ENCODE measurements at regions of chr11 and their contacts with region 1.

Region 1: GRCh38 chr11:62787005-62787759 is at the start of gene TMEM179B:
- DNase-seq: peak; percentile 94 to 100 (median 99)
- ATAC-seq: peak; percentile 68
- H3K4me3 ChIP-seq: peak within 1 kb of the TSS; percentile 94 to 96
- H3K4me3 Mint-ChIP-seq: peak within 1 kb of the TSS; percentile 94
- H3K27ac ChIP-seq: peak within 1 kb of the TSS; percentile 89 to 91
- H3K27ac Mint-ChIP-seq: peak within 1 kb of the TSS; percentile 95
- H3K4me1 ChIP-seq: peaks cover 42% of the 10 kb centered on the region
- H3K4me1 Mint-ChIP-seq: peaks cover 41% of the 10 kb centered on the region
- H3K27me3 ChIP-seq: no peaks in the 10 kb centered on the region
- H3K27me3 Mint-ChIP-seq: no peaks in the 10 kb centered on the region
- CTCF ChIP-seq: peak; percentile 34
- total RNA-seq, gene TMEM179B: 27.5 to 28.4 TPM

Region 2: DNA sequence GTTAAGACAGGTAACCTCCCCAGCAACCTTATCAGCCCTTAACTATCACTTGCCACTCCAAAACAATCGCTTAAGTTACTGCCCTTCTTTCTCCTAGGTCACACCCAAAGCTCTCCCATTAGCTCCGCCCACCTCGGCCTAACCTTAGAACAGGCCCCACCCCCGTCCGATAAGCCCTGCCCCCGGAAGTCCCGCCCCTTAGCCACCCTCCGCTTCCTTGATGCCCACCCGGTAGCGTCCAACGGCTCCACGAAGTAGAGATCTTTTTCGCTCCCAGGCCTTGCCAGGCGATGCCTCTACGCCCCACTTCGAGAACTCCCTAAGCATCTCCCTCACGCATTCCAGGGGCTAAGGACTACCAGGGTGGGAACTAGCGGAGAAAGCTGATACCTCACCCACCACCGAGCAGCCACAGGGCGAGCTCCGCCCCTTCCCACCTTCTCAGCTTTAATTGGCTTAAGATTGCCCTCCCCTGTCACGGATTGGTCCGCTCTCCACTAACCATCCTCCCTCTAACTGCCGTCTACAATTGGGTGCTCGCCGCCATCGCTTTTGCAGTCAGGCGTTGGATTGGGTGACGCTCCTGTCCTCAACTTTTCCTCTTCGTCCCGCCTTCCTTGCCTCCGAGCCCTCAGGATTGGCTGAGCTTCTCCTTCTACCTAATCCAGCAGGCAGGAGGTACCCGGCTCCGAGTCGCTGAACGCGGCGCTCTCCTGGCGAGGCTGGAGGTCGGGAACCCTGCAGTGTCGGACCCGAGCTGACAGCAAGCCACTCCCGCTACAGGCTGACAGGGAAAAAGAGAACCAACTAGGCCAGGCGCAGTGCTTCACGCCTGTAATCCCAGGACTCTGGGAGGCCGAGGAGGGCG is 33.2 kb before region 1 on chr11 and contains the start of gene ZBTB3:
- CTCF ChIA-PET with region 1: interaction called, 8 read pairs
- POLR2A ChIA-PET with region 1: interaction called, 37 read pairs
- intact Hi-C with region 1: loop called in 1 of 2 experiments (anchors 5 kb)
- DNase-seq: peak; percentile 93 to 100 (median 96)
- ATAC-seq: peak; percentile 93
- H3K4me3 ChIP-seq: peak within 1 kb of the TSS; percentile 72 to 88
- H3K4me3 Mint-ChIP-seq: peak within 1 kb of the TSS; percentile 99
- H3K27ac ChIP-seq: peak within 1 kb of the TSS; percentile 64 to 91
- H3K27ac Mint-ChIP-seq: peak within 1 kb of the TSS; percentile 98
- H3K4me1 ChIP-seq: peaks cover 28% of the 10 kb centered on the region
- H3K4me1 Mint-ChIP-seq: peaks cover 32% of the 10 kb centered on the region
- H3K27me3 ChIP-seq: no peaks in the 10 kb centered on the region
- H3K27me3 Mint-ChIP-seq: no peaks in the 10 kb centered on the region
- CTCF ChIP-seq: no peak
- total RNA-seq, gene ZBTB3: 3.7 to 4.8 TPM

Region 3: DNA sequence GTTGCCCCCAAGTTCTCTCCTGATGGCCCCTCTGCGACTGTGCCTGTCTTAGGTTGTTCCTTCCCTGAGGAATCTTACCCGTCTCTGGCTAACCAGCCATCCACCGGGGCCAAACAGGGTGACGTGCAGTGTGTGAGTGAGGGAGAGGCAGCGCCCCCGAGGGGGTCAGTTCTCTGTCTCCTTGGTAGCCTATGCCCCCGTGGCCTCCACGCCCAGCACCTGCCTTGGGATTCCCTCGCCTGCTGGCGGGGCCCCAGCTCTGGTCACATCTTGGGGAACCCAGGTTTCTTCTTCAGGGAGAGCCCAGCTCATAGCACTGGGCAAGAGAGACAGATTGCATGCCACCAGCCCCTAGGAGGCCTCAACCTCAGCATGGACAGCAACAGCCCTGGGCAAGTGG is 12.3 kb after region 1 on chr11:
- CTCF ChIA-PET with region 1: interaction called, 29 read pairs
- POLR2A ChIA-PET with region 1: interaction called, 9 read pairs
- intact Hi-C with region 1: no loop called
- DNase-seq: no peak
- ATAC-seq: no peak
- H3K4me3 ChIP-seq: no peak overlapping the region
- H3K4me3 Mint-ChIP-seq: no peak overlapping the region
- H3K27ac ChIP-seq: peak overlapping the region in 1 of 2 experiments; percentile 18
- H3K27ac Mint-ChIP-seq: no peak overlapping the region
- H3K4me1 ChIP-seq: peaks cover 12% of the 10 kb centered on the region
- H3K4me1 Mint-ChIP-seq: peaks cover 32% of the 10 kb centered on the region
- H3K27me3 ChIP-seq: no peaks in the 10 kb centered on the region
- H3K27me3 Mint-ChIP-seq: no peaks in the 10 kb centered on the region
- CTCF ChIP-seq: no peak

Region 4: GRCh38 chr11:62831520-62832335 is 44.5 kb after region 1 on chr11 and contains the start of gene STX5:
- CTCF ChIA-PET with region 1: interaction called, 13 read pairs
- POLR2A ChIA-PET with region 1: interaction called, 13 read pairs
- intact Hi-C with region 1: loop called (anchors 1 kb)
- DNase-seq: peak; percentile 99 to 100 (median 100)
- ATAC-seq: peak; percentile 97
- H3K4me3 ChIP-seq: peak within 1 kb of the TSS; percentile 88 to 95
- H3K4me3 Mint-ChIP-seq: peak within 1 kb of the TSS; percentile 96
- H3K27ac ChIP-seq: peak within 1 kb of the TSS; percentile 94 to 95
- H3K27ac Mint-ChIP-seq: peak within 1 kb of the TSS; percentile 98
- H3K4me1 ChIP-seq: peaks cover 21% of the 10 kb centered on the region
- H3K4me1 Mint-ChIP-seq: peaks cover 42% of the 10 kb centered on the region
- H3K27me3 ChIP-seq: no peaks in the 10 kb centered on the region
- H3K27me3 Mint-ChIP-seq: no peaks in the 10 kb centered on the region
- CTCF ChIP-seq: no peak
- total RNA-seq, gene STX5: 113 TPM

Region 5: GRCh38 chr11:62855571-62856332 is 68.6 kb after region 1 on chr11:
- CTCF ChIA-PET with region 1: interaction called, 56 read pairs
- POLR2A ChIA-PET with region 1: interaction called, 102 read pairs
- intact Hi-C with region 1: loop called (anchors 2 kb)
- DNase-seq: peak; percentile 96 to 100 (median 98)
- ATAC-seq: peak; percentile 91
- H3K4me3 ChIP-seq: peak overlapping the region; percentile 82 to 89
- H3K4me3 Mint-ChIP-seq: peak overlapping the region; percentile 96
- H3K27ac ChIP-seq: peak overlapping the region; percentile 76 to 84
- H3K27ac Mint-ChIP-seq: peak overlapping the region; percentile 91
- H3K4me1 ChIP-seq: peaks cover 36% of the 10 kb centered on the region
- H3K4me1 Mint-ChIP-seq: peaks cover 56% of the 10 kb centered on the region
- H3K27me3 ChIP-seq: no peaks in the 10 kb centered on the region
- H3K27me3 Mint-ChIP-seq: no peaks in the 10 kb centered on the region
- CTCF ChIP-seq: no peak

Region 6: GRCh38 chr11:62953811-62954210 is 166.6 kb after region 1 on chr11:
- CTCF ChIA-PET with region 1: no interaction called
- POLR2A ChIA-PET with region 1: no interaction called
- intact Hi-C with region 1: no loop called
- DNase-seq: no peak
- ATAC-seq: no peak
- H3K4me3 ChIP-seq: no peak overlapping the region
- H3K4me3 Mint-ChIP-seq: no peak overlapping the region
- H3K27ac ChIP-seq: no peak overlapping the region
- H3K27ac Mint-ChIP-seq: no peak overlapping the region
- H3K4me1 ChIP-seq: no peaks in the 10 kb centered on the region
- H3K4me1 Mint-ChIP-seq: no peaks in the 10 kb centered on the region
- H3K27me3 ChIP-seq: peaks cover 0 to 3% of the 10 kb centered on the region in 2 experiments
- H3K27me3 Mint-ChIP-seq: peaks cover 23% of the 10 kb centered on the region
- CTCF ChIP-seq: no peak

Measured in CD8-positive, alpha-beta T cell (primary cell).